ENCODE measurements at regions of chr16 and their contacts with region 1.

Region 1: GRCh38 chr16:53099318-53100130 is 44.7 kb downstream of the CHD9 start:
- DNase-seq: peak; percentile 91 to 95
- H3K4me3 ChIP-seq: peak overlapping the region; percentile 46
- H3K4me3 Mint-ChIP-seq: peak overlapping the region; percentile 77
- H3K27ac Mint-ChIP-seq: peak overlapping the region; percentile 98
- H3K4me1 ChIP-seq: peaks cover 24% of the 10 kb centered on the region
- H3K4me1 Mint-ChIP-seq: peaks cover 12% of the 10 kb centered on the region
- H3K27me3 ChIP-seq: no peaks in the 10 kb centered on the region
- H3K27me3 Mint-ChIP-seq: no peaks in the 10 kb centered on the region
- CTCF ChIP-seq: no peak

Region 2: DNA sequence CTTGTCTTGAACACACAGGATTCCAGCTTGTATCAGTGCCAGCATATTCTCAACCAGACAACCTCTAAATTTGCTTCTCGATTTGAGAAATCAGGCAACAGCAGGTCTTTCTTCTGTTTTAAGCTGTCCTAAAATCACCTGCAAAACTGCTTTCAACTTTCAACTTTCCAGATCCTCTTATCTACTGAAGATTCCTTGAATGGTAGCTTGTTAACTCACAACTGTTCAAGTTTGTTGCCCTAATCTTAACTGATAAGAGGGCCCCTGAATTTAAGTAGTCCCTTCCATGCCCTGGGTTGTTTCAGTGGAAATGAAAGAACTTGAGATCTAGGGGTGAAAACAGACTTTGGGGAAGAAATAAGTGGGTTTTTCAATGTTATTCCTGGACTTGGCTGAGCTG is 12.5 kb after region 1 on chr16:
- CTCF ChIA-PET with region 1: interaction called, 5 read pairs
- POLR2A ChIA-PET with region 1: no interaction called
- intact Hi-C with region 1: loop called (anchors 1 kb)
- DNase-seq: peak in 1 of 2 experiments; percentile 13
- H3K4me3 ChIP-seq: no peak overlapping the region
- H3K4me3 Mint-ChIP-seq: peak overlapping the region; percentile 55
- H3K27ac Mint-ChIP-seq: no peak overlapping the region
- H3K4me1 ChIP-seq: peaks cover 40% of the 10 kb centered on the region
- H3K4me1 Mint-ChIP-seq: peaks cover 28% of the 10 kb centered on the region
- H3K27me3 ChIP-seq: no peaks in the 10 kb centered on the region
- H3K27me3 Mint-ChIP-seq: no peaks in the 10 kb centered on the region
- CTCF ChIP-seq: no peak

Region 3: DNA sequence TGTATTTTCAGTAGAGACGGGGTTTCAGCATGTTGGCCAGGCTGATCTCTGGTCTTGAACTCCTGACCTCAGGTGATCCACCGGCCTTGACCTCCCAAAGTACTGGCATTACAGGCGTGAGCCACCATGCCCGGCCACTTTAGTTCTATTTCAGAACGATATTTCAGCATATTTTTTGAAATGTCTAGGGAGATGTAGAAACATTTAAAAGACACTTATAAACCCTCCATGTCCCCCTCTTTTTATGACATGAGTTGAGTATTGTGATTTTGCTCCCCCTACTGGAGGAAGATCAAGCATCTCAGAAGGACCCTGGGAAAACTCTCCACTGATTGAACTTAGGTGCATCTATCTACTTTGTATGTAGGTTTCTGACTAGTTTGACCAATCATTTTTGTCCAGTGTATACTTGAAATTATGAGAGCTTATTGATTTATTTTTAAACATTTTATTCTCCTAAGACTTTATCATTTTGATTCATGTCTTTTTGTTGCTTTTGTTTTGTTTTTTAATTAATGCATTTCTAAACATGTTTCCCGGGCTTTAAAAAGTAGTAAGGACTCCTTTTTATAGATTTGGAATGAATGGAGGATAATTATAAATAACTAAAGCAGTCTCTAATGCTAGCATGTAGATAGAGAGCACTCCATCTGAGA is 60.4 kb after region 1 on chr16:
- CTCF ChIA-PET with region 1: no interaction called
- POLR2A ChIA-PET with region 1: no interaction called
- intact Hi-C with region 1: loop called (anchors 2 kb)
- DNase-seq: peak in 1 of 2 experiments; percentile 65
- H3K4me3 ChIP-seq: no peak overlapping the region
- H3K4me3 Mint-ChIP-seq: no peak overlapping the region
- H3K27ac Mint-ChIP-seq: no peak overlapping the region
- H3K4me1 ChIP-seq: no peaks in the 10 kb centered on the region
- H3K4me1 Mint-ChIP-seq: no peaks in the 10 kb centered on the region
- H3K27me3 ChIP-seq: no peaks in the 10 kb centered on the region
- H3K27me3 Mint-ChIP-seq: no peaks in the 10 kb centered on the region
- CTCF ChIP-seq: peak; percentile 76 to 89

Region 4: DNA sequence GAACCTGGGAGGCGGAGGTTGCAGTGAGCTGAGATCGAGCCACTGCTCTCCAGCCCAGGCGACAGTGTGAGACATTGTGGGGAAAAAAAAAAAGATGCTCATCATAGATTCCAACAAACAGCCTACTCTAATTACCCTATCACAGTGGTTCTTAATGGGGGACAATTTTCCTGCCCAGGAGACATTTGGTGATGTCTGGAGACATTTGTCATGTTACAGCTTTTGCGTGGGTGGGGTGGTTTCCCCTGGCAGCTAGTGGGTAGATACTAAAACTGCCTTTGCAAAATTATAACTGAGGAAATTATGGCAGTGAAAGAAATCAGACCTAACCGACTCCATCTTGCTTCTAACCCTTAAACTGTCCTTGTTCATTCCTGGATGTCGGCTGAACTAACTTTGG is 242.3 kb after region 1 on chr16:
- CTCF ChIA-PET with region 1: no interaction called
- POLR2A ChIA-PET with region 1: no interaction called
- intact Hi-C with region 1: no loop called
- DNase-seq: no peak
- H3K4me3 ChIP-seq: no peak overlapping the region
- H3K4me3 Mint-ChIP-seq: no peak overlapping the region
- H3K27ac Mint-ChIP-seq: no peak overlapping the region
- H3K4me1 ChIP-seq: no peaks in the 10 kb centered on the region
- H3K4me1 Mint-ChIP-seq: no peaks in the 10 kb centered on the region
- H3K27me3 ChIP-seq: no peaks in the 10 kb centered on the region
- H3K27me3 Mint-ChIP-seq: peaks cover 2% of the 10 kb centered on the region
- CTCF ChIP-seq: no peak